ENCODE measurements at regions of chr5 and their contacts with region 1.

Region 1: GRCh38 chr5:139968547-139969261 is 74.4 kb downstream of the NRG2 start:
- DNase-seq: peak; percentile 95
- H3K4me3 Mint-ChIP-seq: no peak overlapping the region
- H3K27ac Mint-ChIP-seq: no peak overlapping the region
- H3K4me1 Mint-ChIP-seq: no peaks in the 10 kb centered on the region
- H3K27me3 Mint-ChIP-seq: peaks cover 12% of the 10 kb centered on the region

Region 2: DNA sequence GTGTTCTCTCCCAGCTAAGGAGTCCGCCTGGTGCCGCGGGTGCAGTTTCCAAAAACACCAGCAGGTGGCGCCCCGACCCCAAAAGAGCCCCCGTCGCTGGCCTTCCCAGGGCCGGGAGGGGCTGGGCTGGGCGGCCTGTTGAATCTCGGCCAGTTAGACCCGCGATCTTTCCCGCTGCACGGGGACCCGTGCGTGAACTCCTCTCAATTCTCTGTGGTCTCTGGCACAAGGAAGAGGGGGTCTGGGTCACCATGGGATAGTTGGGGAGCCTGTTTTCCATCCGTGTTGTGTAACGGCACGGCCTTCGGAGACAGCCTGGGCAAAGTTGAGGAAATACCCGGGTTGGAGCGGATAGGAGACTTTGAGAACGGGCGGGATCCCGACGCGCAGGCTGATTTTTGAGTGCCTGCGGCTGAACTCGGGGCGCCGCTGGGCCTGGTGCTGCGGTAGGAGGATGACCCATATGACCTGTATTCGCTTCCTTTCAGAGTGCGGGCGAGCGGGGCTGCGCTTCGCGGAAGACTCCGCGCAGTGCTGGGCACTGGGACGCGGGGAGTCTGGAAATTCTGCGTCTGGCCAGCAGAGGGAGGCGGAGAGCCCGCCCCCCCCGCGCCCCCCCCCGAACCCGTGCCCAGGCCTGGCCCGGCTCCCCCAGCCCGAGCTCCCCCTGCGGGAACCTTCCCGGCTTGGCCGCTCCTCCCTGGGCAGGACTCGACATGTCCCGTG is 181.0 kb before region 1 on chr5:
- CTCF ChIA-PET with region 1: interaction called, 116 read pairs
- intact Hi-C with region 1: loop called (anchors 1 kb)
- DNase-seq: peak; percentile 86
- H3K4me3 Mint-ChIP-seq: peak overlapping the region; percentile 75
- H3K27ac Mint-ChIP-seq: no peak overlapping the region
- H3K4me1 Mint-ChIP-seq: peaks cover 6% of the 10 kb centered on the region
- H3K27me3 Mint-ChIP-seq: peaks cover 14% of the 10 kb centered on the region

Region 3: DNA sequence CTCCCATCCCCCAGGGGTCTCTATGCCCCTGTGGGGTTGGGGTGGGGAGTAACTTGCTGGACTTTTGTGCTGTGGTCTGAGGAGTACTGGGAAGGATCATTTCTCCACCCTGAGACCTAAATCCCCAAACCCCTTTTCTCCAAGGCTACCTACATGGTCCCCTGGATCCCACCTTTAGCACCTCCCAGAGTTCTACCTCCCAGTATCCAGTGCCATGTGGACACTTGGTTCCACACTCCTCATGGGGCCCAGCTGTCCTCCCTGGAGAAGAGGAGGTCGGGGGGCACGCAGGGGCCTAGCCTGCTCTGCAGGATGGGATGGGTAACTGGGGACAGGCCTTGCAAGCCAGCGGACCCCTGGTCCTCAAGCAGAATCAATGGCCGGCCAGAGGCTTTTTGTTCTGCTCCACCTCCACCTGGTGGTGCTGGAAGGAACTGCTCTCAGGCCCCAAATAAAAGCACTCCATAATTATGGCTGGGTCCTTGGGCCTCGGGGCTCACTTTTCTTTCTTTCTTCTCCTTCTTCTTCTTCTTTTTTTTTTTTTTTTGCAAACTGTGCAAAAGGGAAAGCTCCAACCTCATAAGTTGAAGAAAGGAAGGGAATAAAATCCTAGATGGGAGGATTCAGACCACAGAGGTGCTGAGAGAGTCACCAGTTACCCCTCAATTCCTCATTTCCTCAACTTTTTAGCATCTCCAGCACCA is 104.7 kb before region 1 on chr5:
- CTCF ChIA-PET with region 1: interaction called, 36 read pairs
- intact Hi-C with region 1: loop called (anchors 5 kb)
- DNase-seq: peak; percentile 69
- H3K4me3 Mint-ChIP-seq: no peak overlapping the region
- H3K27ac Mint-ChIP-seq: no peak overlapping the region
- H3K4me1 Mint-ChIP-seq: no peaks in the 10 kb centered on the region
- H3K27me3 Mint-ChIP-seq: no peaks in the 10 kb centered on the region

Region 4: GRCh38 chr5:139949710-139950109 is 19.0 kb before region 1 on chr5:
- CTCF ChIA-PET with region 1: interaction called, 36 read pairs
- intact Hi-C with region 1: no loop called
- DNase-seq: no peak
- H3K4me3 Mint-ChIP-seq: no peak overlapping the region
- H3K27ac Mint-ChIP-seq: no peak overlapping the region
- H3K4me1 Mint-ChIP-seq: no peaks in the 10 kb centered on the region
- H3K27me3 Mint-ChIP-seq: peaks cover 35% of the 10 kb centered on the region

Region 5: DNA sequence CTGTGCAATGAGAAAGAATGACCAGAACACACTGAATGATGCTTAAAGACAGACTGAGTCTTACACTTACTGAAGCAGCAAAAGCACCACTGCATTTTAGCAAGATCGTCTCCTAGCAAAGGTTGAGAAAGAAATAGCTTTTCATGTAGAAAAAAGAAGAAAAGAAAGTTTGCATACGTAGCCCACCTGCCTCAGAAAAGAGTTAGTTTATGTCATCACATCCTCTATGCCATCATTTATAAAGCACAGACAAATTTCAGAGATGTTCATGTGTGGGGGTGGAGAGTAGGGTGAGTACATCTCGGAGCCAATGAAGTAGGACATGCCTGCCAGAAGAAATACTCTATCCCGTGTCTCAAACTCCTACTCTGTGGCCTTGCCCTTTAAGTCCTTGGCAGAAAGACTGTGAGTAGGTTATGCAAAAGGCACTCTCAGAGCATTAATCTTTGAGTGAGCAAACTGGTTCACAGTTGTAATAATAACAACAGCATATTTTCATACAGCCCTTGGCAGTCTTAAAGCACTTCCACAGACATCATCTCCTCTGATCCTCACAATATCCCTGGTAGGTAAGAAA is 52.0 kb after region 1 on chr5:
- CTCF ChIA-PET with region 1: interaction called, 12 read pairs
- intact Hi-C with region 1: no loop called
- DNase-seq: no peak
- H3K4me3 Mint-ChIP-seq: no peak overlapping the region
- H3K27ac Mint-ChIP-seq: no peak overlapping the region
- H3K4me1 Mint-ChIP-seq: no peaks in the 10 kb centered on the region
- H3K27me3 Mint-ChIP-seq: peaks cover 14% of the 10 kb centered on the region

Measured in activated naive CD4-positive, alpha-beta T cell treated with anti-CD3 and anti-CD28 coated beads for 36 hours (primary cell).